ENCODE measurements at regions of chr2 and their contacts with region 1.

Region 1: DNA sequence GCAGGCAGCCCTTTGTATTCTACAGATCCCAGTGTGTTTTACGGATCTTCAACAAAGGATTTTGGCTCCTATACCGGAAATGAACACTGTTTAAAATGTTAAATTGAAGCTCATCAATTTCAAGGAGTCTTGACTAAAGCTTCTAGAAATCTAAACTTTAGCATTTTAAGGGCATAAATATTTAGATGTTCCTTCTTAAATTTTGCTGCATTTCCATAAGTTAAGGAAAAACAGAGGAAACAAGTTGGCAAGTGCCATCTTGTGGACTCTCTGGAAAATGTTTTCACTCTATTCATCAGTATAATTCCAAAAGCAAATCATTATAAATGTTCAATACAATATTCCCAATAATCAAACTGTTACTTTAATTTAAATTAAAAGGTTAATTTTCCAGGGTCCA is 19.6 kb downstream of the CHN1 start:
- DNase-seq: no peak
- ATAC-seq: no peak
- H3K4me3 ChIP-seq: no peak overlapping the region
- H3K27ac ChIP-seq: no peak overlapping the region
- H3K4me1 ChIP-seq: no peaks in the 10 kb centered on the region
- H3K27me3 ChIP-seq: no peaks in the 10 kb centered on the region
- CTCF ChIP-seq: peak; percentile 66; the same call in 1 of the 2 replicates

Region 2: DNA sequence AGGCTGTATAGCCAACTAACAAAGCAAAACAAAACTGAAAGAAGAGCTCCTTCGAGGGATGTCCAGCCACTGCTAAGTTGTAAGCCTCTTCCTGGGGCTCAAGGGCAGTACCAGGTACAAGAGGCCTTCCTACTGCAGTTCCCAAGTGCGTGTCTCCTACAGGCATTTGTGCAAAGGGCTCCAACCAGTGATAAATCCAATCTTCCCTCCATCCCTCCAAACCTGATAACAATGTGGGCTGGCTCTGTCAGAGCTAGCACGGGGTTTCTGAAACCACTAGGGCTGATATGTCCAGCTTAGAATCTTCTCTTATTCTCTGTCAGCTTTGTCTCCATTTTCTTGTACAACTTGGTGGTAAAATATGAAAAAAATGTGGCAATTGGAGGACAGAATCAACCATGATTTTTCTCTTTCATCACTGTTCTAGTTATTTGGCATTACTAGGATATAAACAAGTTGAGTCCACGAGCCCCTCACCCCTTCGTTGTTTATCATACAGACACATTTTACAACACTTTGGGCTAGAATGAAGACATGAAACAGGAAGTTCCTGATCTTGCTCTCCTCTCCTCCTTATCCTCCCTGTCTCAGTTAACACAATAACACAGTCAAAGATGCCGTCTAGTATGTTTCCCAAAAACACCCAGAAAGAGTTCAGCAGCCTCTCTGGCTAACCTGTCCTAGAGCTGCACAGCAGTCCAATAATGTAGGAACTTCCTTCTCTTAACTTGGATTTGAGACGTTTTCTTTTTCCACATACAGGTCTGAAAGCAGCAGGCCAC is 352.6 kb before region 1 on chr2:
- CTCF ChIA-PET with region 1: interaction called, 10 read pairs
- POLR2A ChIA-PET with region 1: no interaction called
- in situ Hi-C with region 1: no loop called
- intact Hi-C with region 1: no loop called
- DNase-seq: no peak
- ATAC-seq: no peak
- H3K4me3 ChIP-seq: no peak overlapping the region
- H3K27ac ChIP-seq: no peak overlapping the region
- H3K4me1 ChIP-seq: no peaks in the 10 kb centered on the region
- H3K27me3 ChIP-seq: no peaks in the 10 kb centered on the region
- CTCF ChIP-seq: no peak

Region 3: GRCh38 chr2:174697255-174697654 is 288.4 kb before region 1 on chr2:
- CTCF ChIA-PET with region 1: interaction called, 10 read pairs
- POLR2A ChIA-PET with region 1: no interaction called
- in situ Hi-C with region 1: no loop called
- intact Hi-C with region 1: loop called (anchors 5 kb)
- DNase-seq: peak; percentile 59
- ATAC-seq: peak; percentile 97
- H3K4me3 ChIP-seq: no peak overlapping the region
- H3K27ac ChIP-seq: no peak overlapping the region
- H3K4me1 ChIP-seq: no peaks in the 10 kb centered on the region
- H3K27me3 ChIP-seq: no peaks in the 10 kb centered on the region; the same call in 1 of the 2 replicates
- CTCF ChIP-seq: peak; percentile 94

Region 4: GRCh38 chr2:174771631-174772471 is 213.8 kb before region 1 on chr2:
- CTCF ChIA-PET with region 1: interaction called, 23 read pairs
- POLR2A ChIA-PET with region 1: no interaction called
- in situ Hi-C with region 1: no loop called
- intact Hi-C with region 1: loop called (anchors 2 kb)
- DNase-seq: peak; percentile 47
- ATAC-seq: peak; percentile 99
- H3K4me3 ChIP-seq: peak overlapping the region in 1 of 2 experiments; percentile 44; a peak in 3 of 4 replicates
- H3K27ac ChIP-seq: peak overlapping the region; percentile 48; the same call in 1 of the 2 replicates
- H3K4me1 ChIP-seq: peaks cover 9% of the 10 kb centered on the region
- H3K27me3 ChIP-seq: no peaks in the 10 kb centered on the region
- CTCF ChIP-seq: peak; percentile 87

Region 5: GRCh38 chr2:174959787-174960186 is 25.8 kb before region 1 on chr2:
- CTCF ChIA-PET with region 1: no interaction called
- POLR2A ChIA-PET with region 1: no interaction called
- in situ Hi-C with region 1: no loop called
- intact Hi-C with region 1: no loop called
- DNase-seq: no peak
- ATAC-seq: no peak
- H3K4me3 ChIP-seq: no peak overlapping the region
- H3K27ac ChIP-seq: no peak overlapping the region
- H3K4me1 ChIP-seq: peaks cover 5% of the 10 kb centered on the region; the same call in 1 of the 2 replicates
- H3K27me3 ChIP-seq: no peaks in the 10 kb centered on the region
- CTCF ChIP-seq: no peak

Region 6: GRCh38 chr2:175709248-175709647 is 723.6 kb after region 1 on chr2:
- CTCF ChIA-PET with region 1: no interaction called
- POLR2A ChIA-PET with region 1: no interaction called
- in situ Hi-C with region 1: no loop called
- intact Hi-C with region 1: no loop called
- DNase-seq: no peak
- ATAC-seq: no peak
- H3K4me3 ChIP-seq: no peak overlapping the region
- H3K27ac ChIP-seq: no peak overlapping the region
- H3K4me1 ChIP-seq: no peaks in the 10 kb centered on the region
- H3K27me3 ChIP-seq: no peaks in the 10 kb centered on the region
- CTCF ChIP-seq: no peak